Left ventricle myocardium inferior (tissue), 1 donor: ENCODE measurements at regions of chr7 and their contacts with region 1.

Region 1: DNA sequence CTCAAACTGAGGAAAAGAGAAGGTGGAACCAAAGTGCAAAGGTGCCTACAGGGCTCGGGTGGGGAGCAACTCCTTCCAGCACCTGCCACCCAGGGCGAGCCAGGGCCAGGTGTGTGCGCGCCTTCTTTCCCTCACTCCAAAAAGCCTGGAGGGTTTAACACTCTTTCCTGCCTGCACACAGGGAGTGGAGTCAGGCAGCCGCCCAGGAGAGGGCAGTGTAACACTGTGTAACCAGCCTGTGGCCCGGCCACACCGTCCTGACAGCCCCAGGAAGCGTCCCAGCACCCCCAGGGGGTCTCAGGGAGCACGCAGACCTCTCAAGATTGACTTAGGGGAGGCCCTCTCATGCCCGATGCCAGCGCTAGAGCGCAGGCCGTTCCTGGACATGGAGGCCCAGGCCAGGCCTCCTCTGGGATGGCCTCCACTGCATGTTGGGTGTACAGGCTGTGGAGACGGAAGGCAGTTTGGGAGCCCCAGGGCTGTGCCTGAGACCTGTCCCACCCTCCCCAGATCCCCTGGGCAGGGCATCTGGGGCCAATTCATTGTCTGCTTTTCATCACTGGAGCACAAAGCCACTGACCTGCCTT is 13.4 kb downstream of the BRI3 start:
- DNase-seq: no peak
- H3K4me3 ChIP-seq: no peak overlapping the region
- H3K27ac ChIP-seq: peak overlapping the region; percentile 12
- H3K4me1 ChIP-seq: peaks cover 38% of the 10 kb centered on the region
- H3K27me3 ChIP-seq: no peaks in the 10 kb centered on the region
- CTCF ChIP-seq: peak; percentile 67

Region 2: GRCh38 chr7:98400542-98401340 is 105.9 kb after region 1 on chr7 and contains the start of gene BAIAP2L1:
- intact Hi-C with region 1: loop called (anchors 10 kb)
- DNase-seq: peak; percentile 76
- H3K4me3 ChIP-seq: peak within 1 kb of the TSS; percentile 82
- H3K27ac ChIP-seq: peak within 1 kb of the TSS; percentile 69
- H3K4me1 ChIP-seq: peaks cover 16% of the 10 kb centered on the region
- H3K27me3 ChIP-seq: peaks cover 42% of the 10 kb centered on the region
- CTCF ChIP-seq: no peak
- total RNA-seq, gene BAIAP2L1: 2.1 TPM

Region 3: GRCh38 chr7:98488167-98488566 is 193.3 kb after region 1 on chr7:
- intact Hi-C with region 1: no loop called
- DNase-seq: no peak
- H3K4me3 ChIP-seq: no peak overlapping the region
- H3K27ac ChIP-seq: no peak overlapping the region
- H3K4me1 ChIP-seq: no peaks in the 10 kb centered on the region
- H3K27me3 ChIP-seq: peaks cover 37% of the 10 kb centered on the region
- CTCF ChIP-seq: no peak